ENCODE measurements at regions of chr1 and their contacts with region 1.

Region 1: GRCh38 chr1:183827801-183828200 is 22.9 kb downstream of the RGL1 start:
- DNase-seq: no peak
- H3K4me3 ChIP-seq: no peak overlapping the region
- H3K4me3 Mint-ChIP-seq: no peak overlapping the region
- H3K27ac Mint-ChIP-seq: no peak overlapping the region
- H3K4me1 ChIP-seq: peaks cover 10% of the 10 kb centered on the region; the same call in 1 of the 2 replicates
- H3K4me1 Mint-ChIP-seq: peaks cover 15% of the 10 kb centered on the region
- H3K27me3 ChIP-seq: no peaks in the 10 kb centered on the region
- H3K27me3 Mint-ChIP-seq: no peaks in the 10 kb centered on the region
- CTCF ChIP-seq: no peak

Region 2: DNA sequence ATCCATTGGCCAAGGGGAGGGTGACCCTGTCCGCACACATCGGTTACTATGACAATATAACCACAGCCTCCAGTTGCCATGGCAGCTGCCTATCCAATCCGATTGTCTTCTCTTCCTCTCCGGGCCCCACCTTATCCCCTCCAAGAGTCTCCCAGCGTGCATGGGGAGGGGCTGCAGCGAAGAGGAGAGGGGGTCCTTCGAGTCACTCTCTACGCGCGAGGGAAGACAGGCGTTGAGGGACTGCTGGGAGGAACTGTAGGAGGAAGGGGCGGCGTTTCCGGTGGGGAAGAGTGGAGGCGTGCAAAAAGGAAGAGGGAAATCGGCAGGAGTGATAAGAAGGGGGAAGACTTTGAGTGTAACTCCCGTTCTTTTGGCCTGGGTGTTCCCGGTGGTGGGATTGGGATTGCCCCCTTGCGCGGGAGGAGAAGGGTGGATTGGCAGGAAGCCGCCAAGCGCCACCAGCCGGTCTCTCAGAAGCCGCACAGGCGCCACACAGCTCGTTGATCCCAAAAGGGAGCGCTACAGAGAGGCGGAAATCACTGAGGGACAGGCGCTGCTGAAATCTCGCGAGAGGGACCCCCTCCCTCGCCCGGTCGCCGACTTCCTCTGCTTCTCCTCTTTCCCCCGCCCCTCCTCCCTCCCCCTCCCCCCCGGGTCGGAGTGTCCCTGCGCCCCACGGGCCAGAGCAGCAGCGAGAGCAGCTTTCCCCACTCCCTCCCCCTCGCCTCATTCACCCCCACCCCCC is 355.9 kb before region 1 on chr1:
- CTCF ChIA-PET with region 1: no interaction called
- POLR2A ChIA-PET with region 1: no interaction called
- intact Hi-C with region 1: no loop called
- DNase-seq: peak; percentile 96 to 99
- H3K4me3 ChIP-seq: peak overlapping the region; percentile 87
- H3K4me3 Mint-ChIP-seq: peak overlapping the region; percentile 97
- H3K27ac Mint-ChIP-seq: peak overlapping the region; percentile 100
- H3K4me1 ChIP-seq: peaks cover 17% of the 10 kb centered on the region; the same call in 1 of the 2 replicates
- H3K4me1 Mint-ChIP-seq: peaks cover 13% of the 10 kb centered on the region
- H3K27me3 ChIP-seq: no peaks in the 10 kb centered on the region
- H3K27me3 Mint-ChIP-seq: no peaks in the 10 kb centered on the region
- CTCF ChIP-seq: peak in 1 of 2 experiments; percentile 20

Region 3: DNA sequence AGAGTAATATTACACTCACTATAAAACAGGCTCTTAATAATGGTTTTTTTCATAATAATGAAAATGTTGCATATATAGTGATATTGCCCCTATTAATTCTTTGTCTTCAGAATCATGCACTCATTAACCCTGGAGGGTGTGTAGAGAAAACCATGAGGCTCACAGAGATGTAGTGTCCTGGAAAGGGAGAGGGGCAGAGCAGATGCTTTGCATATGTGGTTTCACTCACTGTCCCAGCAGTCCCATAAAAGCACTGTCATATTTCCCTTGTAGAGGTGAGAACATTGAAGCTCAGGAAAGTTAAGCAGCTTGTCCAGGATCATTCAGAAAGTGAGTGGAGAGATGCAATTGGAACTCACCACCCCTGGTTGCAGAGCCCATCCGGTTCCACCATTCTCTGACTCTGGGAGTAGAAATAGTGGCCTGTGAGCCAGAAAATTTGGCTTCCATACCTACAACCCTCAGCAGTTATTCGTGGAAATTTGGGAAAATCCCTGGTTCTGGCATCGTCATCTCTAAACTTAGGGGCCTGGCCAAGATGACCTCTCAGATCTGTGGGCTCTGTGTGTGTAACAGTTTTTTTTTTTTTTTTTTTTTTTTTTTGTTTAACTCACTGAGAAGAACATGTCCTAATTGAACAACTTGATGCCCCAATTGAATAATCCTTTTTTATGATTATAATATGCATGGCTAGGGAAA is 63.5 kb after region 1 on chr1:
- CTCF ChIA-PET with region 1: no interaction called
- POLR2A ChIA-PET with region 1: no interaction called
- intact Hi-C with region 1: loop called (anchors 5 kb)
- DNase-seq: no peak
- H3K4me3 ChIP-seq: no peak overlapping the region
- H3K4me3 Mint-ChIP-seq: no peak overlapping the region
- H3K27ac Mint-ChIP-seq: no peak overlapping the region
- H3K4me1 ChIP-seq: peaks cover 13% of the 10 kb centered on the region; the same call in 1 of the 2 replicates
- H3K4me1 Mint-ChIP-seq: no peaks in the 10 kb centered on the region
- H3K27me3 ChIP-seq: no peaks in the 10 kb centered on the region
- H3K27me3 Mint-ChIP-seq: no peaks in the 10 kb centered on the region
- CTCF ChIP-seq: no peak